ENCODE measurements at regions of chr17 and their contacts with region 1.

Region 1: DNA sequence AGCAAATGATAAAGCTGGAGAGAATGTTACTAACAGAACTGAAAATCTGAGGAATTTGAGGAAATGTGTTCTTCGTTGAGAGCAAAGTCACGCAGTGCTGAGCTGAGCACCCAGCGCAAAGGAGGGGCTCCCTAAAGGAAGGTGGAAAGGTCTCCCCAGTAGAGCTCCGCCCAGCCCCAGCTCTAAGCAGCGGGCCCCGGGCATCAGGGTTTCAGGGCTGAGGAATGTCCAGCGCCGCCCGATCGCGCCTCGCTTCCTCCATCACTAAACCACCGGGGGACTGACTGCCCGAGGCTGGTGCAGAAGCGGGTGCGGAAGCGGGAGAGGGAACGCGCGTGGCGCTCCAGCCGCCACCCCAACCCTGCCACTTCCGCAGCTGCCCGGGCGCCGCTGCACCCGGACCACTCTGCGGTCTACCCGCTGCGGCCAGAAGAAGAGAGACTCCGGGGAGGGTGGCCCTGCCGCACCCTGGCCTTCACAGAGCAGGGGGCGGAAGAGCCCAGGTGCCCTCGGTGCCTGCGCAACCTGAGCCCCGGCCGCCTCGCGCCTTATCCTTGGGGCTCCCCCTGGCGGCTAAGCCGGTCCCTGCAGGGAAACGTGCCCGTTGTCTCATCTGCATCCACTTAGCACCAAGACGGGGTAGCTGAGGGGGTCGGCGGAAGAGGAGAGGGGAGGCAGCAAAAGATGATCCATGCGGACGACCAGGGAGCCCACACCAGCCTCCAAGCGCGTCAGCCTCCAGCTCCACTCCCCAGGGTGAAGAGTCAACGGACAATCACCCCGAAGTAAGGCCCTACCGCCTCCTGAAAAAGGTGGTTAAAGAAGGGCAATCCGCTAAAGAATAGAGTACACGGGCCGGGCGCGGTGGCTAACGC is 12.4 kb upstream of the GUCY2D start:
- DNase-seq: peak; percentile 90
- H3K4me3 ChIP-seq: peak overlapping the region; percentile 33 to 59 (median 52)
- H3K27ac ChIP-seq: peak overlapping the region; percentile 9 to 62 (median 20)
- H3K4me1 ChIP-seq: peaks cover 0 to 12% (median 8%) of the 10 kb centered on the region in 4 donors
- H3K27me3 ChIP-seq: peaks cover 0 to 7% (median 0%) of the 10 kb centered on the region in 3 donors
- CTCF ChIP-seq: peak; percentile 90 to 98 (median 94)
- EP300 ChIP-seq: no peak
- POLR2A ChIP-seq: no peak

Region 2: GRCh38 chr17:7745748-7746470 is 244.1 kb before region 1 on chr17:
- intact Hi-C with region 1: loop called (anchors 10 kb)
- DNase-seq: no peak
- H3K4me3 ChIP-seq: no peak overlapping the region
- H3K27ac ChIP-seq: no peak overlapping the region
- H3K4me1 ChIP-seq: peaks cover 0 to 14% (median 7%) of the 10 kb centered on the region in 4 donors
- H3K27me3 ChIP-seq: no peaks in the 10 kb centered on the region
- CTCF ChIP-seq: no peak
- EP300 ChIP-seq: no peak
- POLR2A ChIP-seq: no peak

Region 3: GRCh38 chr17:7956228-7956965 is 33.6 kb before region 1 on chr17:
- intact Hi-C with region 1: no loop called
- DNase-seq: peak; percentile 89
- H3K4me3 ChIP-seq: no peak overlapping the region
- H3K27ac ChIP-seq: peak overlapping the region; percentile 47 to 83 (median 76)
- H3K4me1 ChIP-seq: peaks cover 0 to 38% (median 21%) of the 10 kb centered on the region in 4 donors
- H3K27me3 ChIP-seq: no peaks in the 10 kb centered on the region
- CTCF ChIP-seq: no peak
- EP300 ChIP-seq: no peak
- POLR2A ChIP-seq: no peak

Measured in sigmoid colon (tissue), 7 donors.